AG04450 (cell line): ENCODE measurements at regions of chr6 and their contacts with region 1.

Region 1: GRCh38 chr6:34986845-34987246 is 97.8 kb downstream of the ANKS1A start:
- DNase-seq: peak; percentile 65
- H3K4me3 ChIP-seq: no peak overlapping the region
- H3K27ac ChIP-seq: no peak overlapping the region
- H3K27me3 ChIP-seq: no peaks in the 10 kb centered on the region
- CTCF ChIP-seq: peak; percentile 72

Region 2: DNA sequence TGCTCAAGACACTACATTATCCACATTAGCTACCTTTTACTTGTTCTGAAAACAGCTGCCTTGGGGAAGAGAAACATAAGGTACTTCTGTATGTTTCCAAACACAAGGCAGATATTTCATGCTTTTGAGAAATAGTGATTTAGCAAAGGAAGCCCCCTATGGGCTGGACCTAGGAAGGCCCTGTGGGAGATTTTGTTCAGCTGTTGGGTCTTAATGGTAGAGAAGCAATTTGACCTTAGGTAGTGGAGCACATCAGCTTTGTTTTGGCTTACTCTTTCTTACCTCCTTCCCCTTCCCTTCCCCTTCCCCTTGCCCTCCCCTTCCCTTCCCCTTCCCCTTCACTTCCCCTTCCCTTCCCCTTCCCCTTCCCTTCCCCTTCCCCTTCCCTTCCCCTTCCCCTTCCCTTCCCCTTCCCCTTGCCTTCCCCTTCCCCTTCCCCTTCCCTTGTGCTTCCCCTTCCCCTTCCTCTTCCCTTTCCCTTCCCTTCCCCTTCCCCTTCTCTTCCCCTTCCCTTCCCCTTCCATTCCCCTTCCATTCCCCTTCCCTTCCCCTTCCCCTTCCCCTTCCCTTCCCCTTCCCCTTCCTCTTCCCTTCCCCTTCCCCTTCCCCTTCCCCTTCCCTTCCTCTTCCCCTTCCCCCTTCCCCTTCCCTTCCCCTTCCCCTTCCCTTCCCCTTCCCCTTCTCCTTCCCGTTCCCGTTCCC is 13.1 kb before region 1 on chr6:
- CTCF ChIA-PET with region 1: interaction called, 28 read pairs
- POLR2A ChIA-PET with region 1: no interaction called
- DNase-seq: no peak
- H3K4me3 ChIP-seq: no peak overlapping the region
- H3K27ac ChIP-seq: no peak overlapping the region
- H3K27me3 ChIP-seq: no peaks in the 10 kb centered on the region
- CTCF ChIP-seq: 0 out of 2 replicates have a peak, but pooled peaks have one; percentile 9

Region 3: GRCh38 chr6:35049900-35050756 is 63.3 kb after region 1 on chr6:
- CTCF ChIA-PET with region 1: interaction called, 12 read pairs
- POLR2A ChIA-PET with region 1: no interaction called
- DNase-seq: peak; percentile 89
- H3K4me3 ChIP-seq: 0 out of 2 replicates have a peak overlapping the region, but pooled peaks have one; percentile 1
- H3K27ac ChIP-seq: peak overlapping the region; percentile 82
- H3K27me3 ChIP-seq: no peaks in the 10 kb centered on the region
- CTCF ChIP-seq: 0 out of 2 replicates have a peak, but pooled peaks have one; percentile 3

Region 4: DNA sequence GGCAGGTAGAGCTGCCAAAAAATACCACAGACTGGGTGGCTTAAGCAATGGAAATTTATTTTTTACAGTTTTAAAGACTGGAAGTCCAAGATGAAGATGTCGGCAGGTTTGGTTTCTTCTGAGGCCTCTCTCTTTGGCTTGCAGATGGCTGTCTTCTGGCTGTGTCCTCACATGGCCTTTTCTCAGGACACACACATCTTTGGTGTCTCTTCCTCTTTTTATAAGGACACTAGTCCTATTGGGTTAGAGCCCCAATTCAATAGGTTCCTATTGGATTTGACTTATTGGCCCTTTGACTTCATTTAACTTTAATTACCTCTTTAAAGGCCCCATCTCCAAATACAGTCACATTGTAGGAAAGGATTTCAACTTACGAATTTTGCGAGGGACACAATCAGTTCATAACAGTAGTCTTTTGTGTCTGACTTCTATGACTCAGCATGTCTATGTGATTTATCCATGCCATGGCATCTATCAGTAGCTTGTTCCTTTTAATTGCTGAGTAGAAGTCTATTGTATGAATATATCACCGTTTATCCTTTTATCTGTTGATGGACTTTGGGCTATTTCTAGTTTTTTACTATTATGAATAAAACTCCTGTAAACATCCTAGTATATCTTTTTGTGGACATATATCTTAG is 165.3 kb after region 1 on chr6:
- CTCF ChIA-PET with region 1: interaction called, 10 read pairs
- POLR2A ChIA-PET with region 1: no interaction called
- DNase-seq: no peak
- H3K4me3 ChIP-seq: no peak overlapping the region
- H3K27ac ChIP-seq: no peak overlapping the region
- H3K27me3 ChIP-seq: no peaks in the 10 kb centered on the region
- CTCF ChIP-seq: no peak

Region 5: GRCh38 chr6:35240840-35241801 is 254.3 kb after region 1 on chr6:
- CTCF ChIA-PET with region 1: interaction called, 46 read pairs
- POLR2A ChIA-PET with region 1: no interaction called
- DNase-seq: no peak
- H3K4me3 ChIP-seq: no peak overlapping the region
- H3K27ac ChIP-seq: no peak overlapping the region
- H3K27me3 ChIP-seq: no peaks in the 10 kb centered on the region
- CTCF ChIP-seq: peak; percentile 97